Activated B cell treated with CpG ODN at 0.5 μM for 24 hours (primary cell): ENCODE measurements at regions of chr4 and their contacts with region 1.

Region 1: DNA sequence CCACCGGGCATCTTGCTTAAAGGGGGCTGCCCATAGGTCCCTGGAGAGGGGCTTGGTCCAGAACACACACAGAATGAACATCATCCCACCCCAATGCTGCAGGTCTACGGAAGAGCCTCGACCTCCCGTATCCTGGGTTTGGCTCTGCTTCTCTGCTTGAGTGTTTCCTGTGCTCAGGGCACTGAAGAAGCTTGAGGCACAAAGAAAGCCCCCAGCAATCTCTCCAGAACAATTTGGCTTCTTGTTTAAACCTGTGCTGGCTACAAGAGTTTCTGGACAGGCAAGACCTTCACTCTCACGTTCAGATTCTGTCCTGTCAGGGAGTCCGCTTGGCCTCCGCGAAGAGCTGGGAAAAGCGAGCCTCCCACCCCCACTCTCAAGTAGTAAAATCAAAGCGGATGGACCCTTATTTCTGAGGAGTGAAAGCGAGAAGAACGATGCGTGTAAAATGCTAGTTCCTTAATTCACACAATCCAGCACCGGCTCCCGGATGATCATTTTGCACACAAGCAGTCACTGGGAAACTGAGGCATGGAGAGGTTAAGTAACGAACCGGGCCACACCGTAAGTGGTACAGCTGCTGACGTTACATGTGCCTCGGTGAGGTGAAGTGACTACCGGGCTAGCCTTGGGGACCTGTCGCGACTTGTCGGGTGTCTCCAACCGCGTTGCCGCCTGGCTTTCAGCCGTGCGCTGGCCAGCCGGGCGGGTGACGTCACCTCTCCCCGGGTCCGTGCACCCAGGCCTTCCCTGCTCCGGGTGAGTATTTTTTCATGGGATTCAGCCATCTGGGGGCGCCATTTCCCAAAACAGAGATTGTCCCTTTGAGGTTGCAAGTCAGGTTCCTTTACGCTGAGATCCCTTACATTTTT is 3.1 kb upstream of the SFRP2 start:
- DNase-seq: no peak
- ATAC-seq: no peak
- H3K4me3 Mint-ChIP-seq: peak overlapping the region; percentile 81
- H3K27ac Mint-ChIP-seq: no peak overlapping the region
- H3K4me1 Mint-ChIP-seq: peaks cover 48% of the 10 kb centered on the region
- H3K27me3 Mint-ChIP-seq: peaks cover 77% of the 10 kb centered on the region
- CTCF ChIP-seq: no peak

Region 2: GRCh38 chr4:154491341-154492271 is 699.6 kb after region 1 on chr4 and contains the start of gene DCHS2:
- CTCF ChIA-PET with region 1: no interaction called
- POLR2A ChIA-PET with region 1: no interaction called
- intact Hi-C with region 1: loop called (anchors 5 kb)
- DNase-seq: no peak
- ATAC-seq: peak; percentile 38
- H3K4me3 Mint-ChIP-seq: peak within 1 kb of the TSS; percentile 84
- H3K27ac Mint-ChIP-seq: no peak within 1 kb of the TSS
- H3K4me1 Mint-ChIP-seq: peaks cover 18% of the 10 kb centered on the region
- H3K27me3 Mint-ChIP-seq: peaks cover 55% of the 10 kb centered on the region
- CTCF ChIP-seq: no peak
- total RNA-seq, gene DCHS2: 0.02 and 0.13 TPM in 2 replicates